Activated T-helper 1 cell treated with anti-CD3 and anti-CD28 coated beads, Interleukin-12 subunit alpha, Interleukin-12 subunit beta, Interleukin-2, Interleukin-4 antibody, amounts not matched to agents 30 ng/mL and 10 ng/mL and 1 ng/mL, durations not matched to agents 14 hours and 24 hours and 36 hours (primary cell): ENCODE measurements at regions of chr11 and their contacts with region 1.

Region 1: DNA sequence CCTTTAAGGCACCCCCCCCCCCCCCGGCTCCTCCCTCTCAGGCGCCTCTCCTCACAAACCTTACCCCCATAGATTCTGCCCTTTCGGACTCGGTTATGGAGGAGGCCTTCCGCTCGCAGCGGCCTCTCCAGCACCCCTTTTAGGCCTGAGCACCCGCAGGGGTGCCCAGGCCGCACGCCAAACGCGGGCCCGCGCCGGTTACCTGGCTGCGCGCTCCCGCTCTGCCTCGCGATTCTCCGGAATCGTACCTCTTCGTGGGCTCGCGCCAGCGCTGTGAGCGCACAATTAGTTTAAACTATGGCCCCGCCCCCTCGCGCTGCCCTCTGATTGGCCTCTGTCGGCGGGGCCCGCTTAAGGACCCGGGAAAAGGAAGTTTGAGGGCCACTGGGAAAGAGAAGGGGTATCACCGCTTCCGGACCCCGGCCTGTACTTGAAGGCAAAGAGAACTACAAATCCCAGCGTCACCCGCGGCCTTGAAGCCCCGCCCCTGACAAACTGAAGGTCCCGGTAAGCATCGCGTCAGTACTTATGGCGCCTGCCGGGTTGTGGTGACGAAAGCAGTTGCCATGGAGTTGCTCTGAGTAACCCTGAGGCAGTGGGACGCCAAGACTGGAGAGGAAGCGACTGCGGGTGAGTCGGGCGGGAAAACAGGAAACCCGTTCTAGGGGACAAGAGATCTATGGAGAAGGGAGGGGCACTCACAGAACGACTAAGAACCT is at the starts of genes LRRC51 and NUMA1:
- DNase-seq: peak; percentile 99
- H3K4me3 Mint-ChIP-seq: peak within 1 kb of the TSS; percentile 95
- H3K27ac Mint-ChIP-seq: peak within 1 kb of the TSS; percentile 93
- H3K4me1 Mint-ChIP-seq: peaks cover 49% of the 10 kb centered on the region
- H3K27me3 Mint-ChIP-seq: no peaks in the 10 kb centered on the region
- total RNA-seq, gene LRRC51: 5.7 and 8.2 TPM in 2 replicates
- total RNA-seq, gene NUMA1: 141 and 150 TPM in 2 replicates

Region 2: DNA sequence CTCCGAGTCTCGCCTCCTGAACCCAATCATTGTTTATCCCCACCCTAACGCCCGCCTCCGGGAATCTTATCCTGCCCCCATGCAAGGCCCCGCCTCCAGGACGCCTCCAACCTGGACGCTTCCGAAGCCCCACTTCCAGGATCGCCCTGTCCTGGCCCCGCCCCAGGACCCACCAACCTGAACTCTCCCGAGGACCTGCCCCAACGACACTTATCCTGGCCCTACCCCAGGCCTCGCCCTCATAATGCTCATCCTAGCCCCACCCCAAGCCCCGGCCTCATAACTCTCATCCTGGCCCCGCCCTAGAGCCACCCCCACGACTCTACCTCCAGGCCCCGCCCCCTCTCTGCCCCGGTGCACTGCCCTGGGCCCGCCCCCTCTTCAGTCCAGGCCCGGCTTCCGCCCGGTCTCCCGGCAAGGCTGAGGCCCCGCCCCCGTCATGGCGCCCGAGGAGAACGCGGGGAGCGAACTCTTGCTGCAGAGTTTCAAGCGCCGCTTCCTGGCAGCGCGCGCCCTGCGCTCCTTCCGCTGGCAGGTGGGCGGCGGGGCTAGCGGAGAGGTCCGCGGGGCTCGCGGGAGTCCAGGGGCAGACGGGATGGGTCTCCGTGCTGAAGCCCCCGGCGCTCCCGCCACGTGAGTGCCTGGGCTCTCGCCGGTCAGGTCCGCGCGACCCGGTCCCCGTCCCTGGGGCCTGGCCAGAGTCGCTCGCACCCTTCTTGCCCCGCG is 293.2 kb before region 1 on chr11:
- intact Hi-C with region 1: loop called (anchors 1 kb)
- DNase-seq: peak; percentile 91
- H3K4me3 Mint-ChIP-seq: peak overlapping the region; percentile 97
- H3K27ac Mint-ChIP-seq: peak overlapping the region; percentile 97
- H3K4me1 Mint-ChIP-seq: peaks cover 23% of the 10 kb centered on the region
- H3K27me3 Mint-ChIP-seq: no peaks in the 10 kb centered on the region

Region 3: GRCh38 chr11:72030472-72031045 is 49.9 kb before region 1 on chr11:
- intact Hi-C with region 1: loop called (anchors 1 kb)
- DNase-seq: no peak
- H3K4me3 Mint-ChIP-seq: no peak overlapping the region
- H3K27ac Mint-ChIP-seq: no peak overlapping the region
- H3K4me1 Mint-ChIP-seq: peaks cover 33% of the 10 kb centered on the region
- H3K27me3 Mint-ChIP-seq: no peaks in the 10 kb centered on the region

Region 4: GRCh38 chr11:72091005-72091691 is 10.7 kb after region 1 on chr11:
- intact Hi-C with region 1: loop called (anchors 1 kb)
- DNase-seq: peak; percentile 56
- H3K4me3 Mint-ChIP-seq: no peak overlapping the region
- H3K27ac Mint-ChIP-seq: no peak overlapping the region
- H3K4me1 Mint-ChIP-seq: peaks cover 7% of the 10 kb centered on the region
- H3K27me3 Mint-ChIP-seq: no peaks in the 10 kb centered on the region

Region 5: DNA sequence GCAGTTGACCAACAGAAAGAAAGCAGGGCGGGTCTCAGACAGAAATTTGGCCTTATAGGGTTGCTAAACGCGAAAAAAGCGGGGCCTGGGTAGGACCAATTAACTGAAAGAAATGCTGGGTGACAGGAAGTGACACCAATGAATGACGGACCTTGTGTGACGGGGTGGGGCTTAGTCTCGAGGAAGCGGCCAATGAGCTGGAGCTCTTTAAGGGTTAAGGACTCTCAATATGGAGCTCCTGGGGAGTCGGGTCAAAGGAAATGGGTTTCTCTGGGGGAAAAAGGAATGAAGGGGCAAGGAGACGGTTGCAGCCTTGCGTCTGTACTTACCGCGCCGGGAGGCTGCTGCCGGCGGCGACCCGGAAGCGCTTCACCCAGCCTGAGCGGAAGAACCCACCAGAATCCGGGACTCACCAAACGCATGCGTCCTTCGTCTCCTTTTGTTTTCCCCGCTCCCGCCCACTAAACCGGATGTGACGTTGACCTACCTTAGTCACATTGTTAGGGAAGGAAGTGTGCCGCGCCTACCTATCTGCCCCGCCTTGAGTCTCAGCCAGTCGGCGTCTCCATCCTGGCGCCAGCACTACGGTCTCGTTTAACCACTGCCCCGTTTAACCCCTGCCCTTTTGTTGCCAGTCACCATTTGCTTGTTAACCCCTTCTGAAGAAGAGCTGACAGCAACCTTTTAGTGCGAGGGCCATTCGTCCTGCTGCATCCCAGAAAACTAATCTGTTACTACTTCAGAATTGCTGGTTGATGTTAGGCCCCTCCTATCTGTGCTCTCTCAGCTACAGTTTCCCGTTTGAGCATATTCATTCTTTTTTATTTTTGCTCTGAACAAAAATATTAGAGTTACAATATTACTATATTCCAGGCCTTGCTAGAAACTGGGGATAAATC is 32.2 kb after region 1 on chr11 and contains the start of gene ANAPC15:
- intact Hi-C with region 1: loop called (anchors 1 kb)
- DNase-seq: peak; percentile 97
- H3K4me3 Mint-ChIP-seq: peak within 1 kb of the TSS; percentile 90
- H3K27ac Mint-ChIP-seq: peak within 1 kb of the TSS; percentile 98
- H3K4me1 Mint-ChIP-seq: peaks cover 28% of the 10 kb centered on the region
- H3K27me3 Mint-ChIP-seq: no peaks in the 10 kb centered on the region
- total RNA-seq, gene ANAPC15: 49.4 and 51.9 TPM in 2 replicates

Region 6: DNA sequence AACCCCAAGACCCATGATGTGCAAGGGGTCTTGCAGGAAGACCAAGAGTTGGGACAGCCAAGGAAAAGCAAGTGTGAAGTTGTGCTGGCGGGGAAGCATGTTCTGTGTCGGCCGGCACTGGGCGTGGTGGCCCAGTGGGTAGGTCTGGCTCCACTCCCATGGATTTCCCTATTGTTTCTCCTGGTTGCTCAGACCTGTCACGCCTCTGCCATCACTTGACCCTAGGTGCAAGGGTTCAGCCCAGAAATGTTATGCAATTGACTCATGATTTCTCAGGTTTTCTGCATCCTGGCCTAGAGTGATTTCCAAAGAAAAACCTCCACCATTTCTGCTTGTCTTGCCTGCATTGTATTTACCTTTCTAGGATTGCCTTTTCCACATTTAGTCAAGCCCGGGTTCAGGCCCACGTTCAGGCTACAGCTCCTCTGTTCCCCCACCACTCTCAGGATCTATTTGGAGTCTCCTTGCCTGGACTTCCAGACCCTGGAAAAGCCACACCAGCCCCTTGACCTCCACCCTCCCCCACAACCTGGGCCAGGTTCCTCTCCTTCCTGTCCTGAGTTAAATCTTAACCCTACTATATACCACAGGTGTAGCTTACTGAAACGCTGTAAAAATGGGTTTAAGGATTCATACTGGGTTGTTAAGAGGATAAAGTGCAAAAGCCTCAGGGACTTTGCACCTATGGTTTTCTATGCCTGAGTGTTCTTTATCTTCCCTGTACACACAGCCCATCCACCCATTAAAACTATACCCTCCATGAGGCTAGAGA is 94.1 kb after region 1 on chr11:
- intact Hi-C with region 1: no loop called
- DNase-seq: no peak
- H3K4me3 Mint-ChIP-seq: no peak overlapping the region
- H3K27ac Mint-ChIP-seq: no peak overlapping the region
- H3K4me1 Mint-ChIP-seq: no peaks in the 10 kb centered on the region
- H3K27me3 Mint-ChIP-seq: peaks cover 6% of the 10 kb centered on the region

Region 7: DNA sequence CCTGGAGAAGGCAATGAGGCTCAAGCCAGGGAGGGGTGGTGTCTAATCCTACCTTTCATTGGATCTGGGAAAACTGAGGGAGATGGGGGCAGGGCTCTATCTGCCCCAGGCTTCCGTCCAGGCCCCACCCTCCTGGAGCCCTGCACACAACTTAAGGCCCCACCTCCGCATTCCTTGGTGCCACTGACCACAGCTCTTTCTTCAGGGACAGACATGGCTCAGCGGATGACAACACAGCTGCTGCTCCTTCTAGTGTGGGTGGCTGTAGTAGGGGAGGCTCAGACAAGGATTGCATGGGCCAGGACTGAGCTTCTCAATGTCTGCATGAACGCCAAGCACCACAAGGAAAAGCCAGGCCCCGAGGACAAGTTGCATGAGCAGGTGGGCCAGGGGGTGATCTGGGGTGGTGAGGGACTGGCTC is 111.6 kb after region 1 on chr11 and contains the start of gene FOLR1:
- intact Hi-C with region 1: no loop called
- DNase-seq: no peak
- H3K4me3 Mint-ChIP-seq: no peak within 1 kb of the TSS
- H3K27ac Mint-ChIP-seq: no peak within 1 kb of the TSS
- H3K4me1 Mint-ChIP-seq: no peaks in the 10 kb centered on the region
- H3K27me3 Mint-ChIP-seq: peaks cover 3% of the 10 kb centered on the region
- total RNA-seq, gene FOLR1: not detected in 2 replicates

Region 8: DNA sequence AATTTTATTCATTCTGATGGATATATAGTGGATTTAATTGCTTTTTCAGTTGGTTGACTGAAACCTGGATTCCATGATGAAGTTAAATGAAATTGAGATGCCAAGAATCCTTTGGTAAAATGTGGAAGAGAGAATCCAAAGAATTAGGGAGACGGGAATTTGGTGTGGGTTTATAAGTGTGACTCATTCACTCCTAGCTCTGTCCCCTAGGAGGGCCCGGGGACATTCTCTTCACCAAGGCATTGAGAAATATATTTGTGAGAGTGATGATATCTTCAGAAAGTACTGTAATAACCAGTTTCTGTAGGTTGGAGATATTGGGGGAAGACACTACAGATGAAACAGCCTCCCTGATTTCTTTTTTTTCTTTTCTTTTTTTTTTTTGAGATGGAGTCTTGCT is 177.1 kb after region 1 on chr11:
- intact Hi-C with region 1: no loop called
- DNase-seq: no peak
- H3K4me3 Mint-ChIP-seq: no peak overlapping the region
- H3K27ac Mint-ChIP-seq: no peak overlapping the region
- H3K4me1 Mint-ChIP-seq: peaks cover 3% of the 10 kb centered on the region
- H3K27me3 Mint-ChIP-seq: peaks cover 17% of the 10 kb centered on the region

Region 9: GRCh38 chr11:72668611-72669347 is 588.4 kb after region 1 on chr11:
- intact Hi-C with region 1: loop called (anchors 1 kb)
- DNase-seq: peak; percentile 43
- H3K4me3 Mint-ChIP-seq: peak overlapping the region; percentile 52
- H3K27ac Mint-ChIP-seq: peak overlapping the region; percentile 71
- H3K4me1 Mint-ChIP-seq: peaks cover 15% of the 10 kb centered on the region
- H3K27me3 Mint-ChIP-seq: peaks cover 33% of the 10 kb centered on the region